Tibial artery (tissue), 4 donors: ENCODE measurements at regions of chr13 and their contacts with region 1.

Region 1: DNA sequence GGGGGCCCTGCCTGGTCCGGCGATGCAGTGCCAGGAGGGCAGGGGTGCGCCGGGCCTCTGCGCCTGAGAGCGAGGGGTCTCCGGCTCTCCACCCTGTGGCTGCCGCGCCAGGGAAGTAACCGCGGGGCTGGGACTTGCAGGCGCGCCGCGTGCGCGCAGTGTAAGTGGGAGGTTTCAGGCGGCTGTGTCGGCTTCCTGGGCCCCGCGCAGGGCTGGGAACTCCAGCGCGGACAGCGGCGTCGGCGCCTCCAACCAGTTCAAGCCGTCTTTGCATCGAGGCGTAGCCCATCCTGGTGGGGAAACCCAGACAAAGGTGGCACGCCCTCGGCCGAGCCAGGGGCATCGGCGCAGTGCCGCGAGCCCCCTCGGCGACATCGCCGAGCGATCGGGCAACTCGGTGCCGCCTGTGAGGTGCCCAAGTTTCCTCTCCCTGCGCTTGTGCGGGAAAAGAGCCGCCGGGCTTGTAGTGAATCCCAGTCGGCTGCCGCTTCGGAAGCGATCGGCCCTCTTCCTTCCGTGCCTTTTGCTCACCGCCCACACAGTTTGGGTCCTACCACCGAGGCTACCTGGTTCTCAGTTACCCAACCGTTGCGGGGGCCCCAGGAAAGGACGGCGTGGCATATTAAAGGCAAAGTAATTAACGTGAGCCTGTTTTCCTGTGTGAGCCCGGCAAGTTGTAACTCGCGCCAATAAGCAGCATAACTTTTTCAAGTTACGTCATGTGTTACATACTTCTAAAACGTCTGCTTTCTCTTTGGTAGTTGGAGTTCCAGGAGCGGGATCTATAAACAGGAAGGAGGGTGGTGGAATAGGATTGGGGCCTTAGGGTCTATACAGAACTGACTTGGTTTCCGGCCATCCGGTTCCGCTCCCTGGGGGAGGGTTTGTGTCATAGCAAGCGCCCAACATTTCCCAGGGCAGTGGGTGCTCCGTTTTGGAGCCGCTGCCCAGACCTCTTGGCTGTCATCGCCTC is 1.2 kb downstream of the LRCH1 start:
- DNase-seq: peak; percentile 68 to 85
- H3K4me3 ChIP-seq: peak overlapping the region; percentile 94 to 98
- H3K27ac ChIP-seq: peak overlapping the region; percentile 96 to 98
- H3K4me1 ChIP-seq: peaks cover 0 to 37% (median 20%) of the 10 kb centered on the region in 4 donors
- H3K27me3 ChIP-seq: no peaks in the 10 kb centered on the region
- CTCF ChIP-seq: peak; percentile 31 to 39

Region 2: DNA sequence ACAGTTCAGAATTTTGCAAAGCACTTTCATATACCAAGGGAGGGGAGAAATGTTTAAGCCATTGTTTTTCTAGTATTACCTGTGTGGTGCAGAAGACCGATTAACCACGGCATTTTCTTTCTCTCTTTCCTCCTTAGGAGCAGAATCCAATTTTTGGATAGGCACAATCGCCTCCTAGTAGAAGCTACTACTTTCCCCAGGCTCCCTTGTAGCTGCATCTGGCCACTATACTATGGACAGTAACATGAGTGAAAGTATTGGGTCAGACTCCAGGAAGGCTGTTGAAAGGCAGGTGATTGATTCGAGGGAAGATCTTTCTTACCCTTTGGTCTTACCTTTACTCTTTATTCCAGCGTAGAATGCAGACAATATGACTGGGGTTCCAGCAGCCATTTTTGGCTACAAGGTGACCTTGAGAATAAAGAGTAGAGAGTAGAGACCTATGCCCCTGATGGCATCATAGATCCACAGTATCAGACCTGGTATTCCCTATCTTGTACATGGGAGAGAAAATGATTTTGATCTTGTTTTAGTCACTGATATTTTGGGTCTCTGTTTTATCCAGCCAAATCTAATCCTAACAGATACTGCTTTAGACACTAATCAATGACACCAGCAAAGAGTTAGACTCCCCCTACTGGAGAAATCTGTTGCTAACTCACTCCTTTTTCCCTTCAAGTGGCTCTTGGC is 265.5 kb before region 1 on chr13:
- intact Hi-C with region 1: no loop called
- DNase-seq: no peak
- H3K4me3 ChIP-seq: no peak overlapping the region
- H3K27ac ChIP-seq: no peak overlapping the region
- H3K4me1 ChIP-seq: no peaks in the 10 kb centered on the region
- H3K27me3 ChIP-seq: no peaks in the 10 kb centered on the region
- CTCF ChIP-seq: peak; percentile 10 to 20

Region 3: DNA sequence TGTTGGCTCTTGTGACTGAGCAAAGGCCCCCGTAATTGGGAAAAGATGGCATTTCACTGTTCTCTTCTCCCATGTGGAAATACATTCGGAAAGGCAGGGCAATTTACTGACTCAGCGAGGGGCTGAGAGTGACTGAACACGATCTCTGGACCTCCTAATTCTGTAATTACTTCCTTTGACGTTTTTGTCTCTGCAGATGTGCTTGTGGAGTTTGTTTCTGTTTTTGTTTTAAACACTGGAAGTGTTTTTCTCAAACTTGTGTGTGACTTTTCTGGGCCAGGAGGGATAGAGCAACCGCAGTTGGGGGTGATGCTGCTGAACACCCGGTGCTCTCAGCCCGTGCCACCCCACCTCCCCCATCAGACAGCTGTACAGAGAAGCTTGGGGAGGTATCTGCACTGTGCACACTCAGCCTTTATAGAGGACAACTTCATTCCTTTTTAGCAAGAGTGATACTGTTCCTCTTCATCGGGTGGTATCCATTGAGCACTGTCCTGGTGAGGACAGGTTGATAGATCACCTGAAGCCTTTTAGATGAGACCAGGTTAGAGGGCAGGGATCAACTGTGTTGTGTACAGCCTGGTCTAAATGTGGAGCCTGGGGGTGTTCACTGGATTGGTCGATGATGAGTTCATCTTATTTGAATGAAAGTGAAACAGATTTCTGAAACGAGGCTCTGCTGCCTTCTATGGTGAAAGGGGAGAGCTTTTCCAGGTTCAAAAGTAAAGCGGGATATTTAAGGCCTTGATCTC is 125.4 kb after region 1 on chr13:
- intact Hi-C with region 1: loop called (anchors 10 kb)
- DNase-seq: no peak
- H3K4me3 ChIP-seq: peak overlapping the region; percentile 40 to 45
- H3K27ac ChIP-seq: peak overlapping the region; percentile 65 to 68
- H3K4me1 ChIP-seq: peaks cover 0 to 68% (median 28%) of the 10 kb centered on the region in 4 donors
- H3K27me3 ChIP-seq: no peaks in the 10 kb centered on the region
- CTCF ChIP-seq: no peak

Region 4: DNA sequence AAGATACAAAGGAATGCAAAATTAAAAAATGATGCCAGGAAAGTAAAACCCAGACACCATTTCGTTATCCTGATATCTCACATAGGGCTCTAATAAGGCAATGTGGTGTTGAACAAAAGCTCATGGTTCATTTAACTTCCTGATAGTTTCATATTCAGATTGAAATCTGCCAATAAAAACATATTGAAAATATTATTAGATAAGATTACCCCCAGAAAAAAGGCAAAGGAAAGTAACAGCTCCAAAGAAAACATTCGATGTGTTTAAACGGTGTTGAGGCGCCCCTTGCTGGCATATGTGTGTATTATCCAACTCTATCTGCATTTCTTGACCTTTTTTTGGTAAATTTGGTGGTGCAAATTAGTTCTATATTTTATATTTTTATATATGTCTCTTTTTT is 166.9 kb after region 1 on chr13:
- intact Hi-C with region 1: loop called (anchors 2 kb)
- DNase-seq: peak in 1 of 2 donors; percentile 38
- H3K4me3 ChIP-seq: no peak overlapping the region
- H3K27ac ChIP-seq: peak overlapping the region in 1 of 2 donors; percentile 42
- H3K4me1 ChIP-seq: peaks cover 0 to 27% (median 1%) of the 10 kb centered on the region in 4 donors
- H3K27me3 ChIP-seq: no peaks in the 10 kb centered on the region
- CTCF ChIP-seq: peak; percentile 64 to 82

Region 5: DNA sequence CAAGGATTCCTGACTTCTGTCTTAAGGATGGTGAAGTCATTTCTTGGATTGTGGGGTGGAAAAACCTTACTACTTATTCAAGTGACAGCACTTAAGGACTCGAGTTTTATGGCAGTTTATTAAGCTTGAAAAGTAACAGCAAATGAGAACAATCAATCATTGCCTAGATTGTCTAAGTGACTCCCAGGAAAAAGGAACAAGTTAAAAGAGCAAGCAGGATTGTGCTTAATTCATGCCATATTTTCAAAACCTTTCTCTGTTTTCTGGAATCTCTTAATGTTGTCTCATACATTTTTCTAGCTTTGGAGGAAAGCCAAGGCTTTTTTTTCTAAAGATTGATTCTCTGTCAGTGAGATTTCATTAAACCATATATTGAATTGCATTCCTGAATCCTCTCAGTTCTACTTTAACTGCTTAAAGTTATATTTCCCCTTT is 578.9 kb after region 1 on chr13:
- intact Hi-C with region 1: no loop called
- DNase-seq: no peak
- H3K4me3 ChIP-seq: no peak overlapping the region
- H3K27ac ChIP-seq: no peak overlapping the region
- H3K4me1 ChIP-seq: peaks cover 0 to 5% (median 0%) of the 10 kb centered on the region in 4 donors
- H3K27me3 ChIP-seq: no peaks in the 10 kb centered on the region
- CTCF ChIP-seq: no peak